ENCODE measurements at regions of chr10 and their contacts with region 1.

Region 1: DNA sequence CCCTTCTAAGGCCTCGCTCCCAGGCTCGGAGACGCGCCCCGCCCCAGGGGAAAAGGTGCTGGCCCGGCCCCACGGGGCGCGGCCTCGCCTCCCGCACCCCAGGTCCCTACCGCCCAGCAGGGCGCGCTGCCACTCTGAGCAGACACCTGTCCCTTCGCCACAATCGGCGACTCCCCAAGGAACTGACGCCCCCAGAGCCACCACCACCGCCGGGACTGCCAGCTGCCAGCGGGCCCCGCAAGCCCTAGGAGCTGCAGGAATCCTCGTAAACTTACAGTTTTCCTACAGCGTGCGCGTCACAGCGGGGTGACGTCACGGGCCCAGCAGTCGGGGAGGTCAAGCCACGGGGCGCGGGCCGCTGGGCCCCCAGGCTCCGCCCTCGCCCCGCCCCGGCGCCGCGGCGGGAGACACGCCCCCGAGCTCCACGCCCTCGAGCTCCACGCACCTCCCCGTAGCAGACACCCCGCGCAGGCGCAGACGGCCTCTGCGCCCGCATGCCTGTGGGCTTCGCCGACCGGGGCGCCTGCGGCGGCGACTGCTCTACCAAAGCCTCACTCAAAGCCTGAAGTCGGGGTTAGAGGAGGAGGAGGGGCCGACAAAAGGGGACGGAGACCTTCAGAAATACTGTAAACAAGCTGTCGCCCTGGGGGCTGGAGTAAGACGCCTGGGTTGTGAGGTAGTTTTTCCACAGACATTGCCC is at the start of gene ZNF438:
- DNase-seq: peak; percentile 98
- ATAC-seq: peak; percentile 84
- H3K4me3 ChIP-seq: peak within 1 kb of the TSS; percentile 61 to 88 (median 76)
- H3K4me3 Mint-ChIP-seq: peak within 1 kb of the TSS; percentile 94
- H3K27ac ChIP-seq: peak within 1 kb of the TSS; percentile 99
- H3K27ac Mint-ChIP-seq: peak within 1 kb of the TSS; percentile 99
- H3K4me1 ChIP-seq: peaks cover 7 to 16% of the 10 kb centered on the region in 2 donors
- H3K4me1 Mint-ChIP-seq: peaks cover 9% of the 10 kb centered on the region
- H3K27me3 ChIP-seq: no peaks in the 10 kb centered on the region
- H3K27me3 Mint-ChIP-seq: no peaks in the 10 kb centered on the region
- CTCF ChIP-seq: peak; percentile 82
- total RNA-seq, gene ZNF438: 3.7 and 3.9 TPM in 2 replicates

Region 2: GRCh38 chr10:30433730-30434272 is 597.9 kb before region 1 on chr10 and contains the start of gene MAP3K8:
- CTCF ChIA-PET with region 1: no interaction called
- POLR2A ChIA-PET with region 1: no interaction called
- intact Hi-C with region 1: loop called (anchors 5 kb)
- DNase-seq: peak; percentile 96
- ATAC-seq: peak; percentile 73
- H3K4me3 ChIP-seq: peak within 1 kb of the TSS; percentile 93 to 99 (median 97)
- H3K4me3 Mint-ChIP-seq: peak within 1 kb of the TSS; percentile 98
- H3K27ac ChIP-seq: peak within 1 kb of the TSS; percentile 95 to 99
- H3K27ac Mint-ChIP-seq: peak within 1 kb of the TSS; percentile 97
- H3K4me1 ChIP-seq: peaks cover 56 to 74% of the 10 kb centered on the region in 2 donors
- H3K4me1 Mint-ChIP-seq: peaks cover 71% of the 10 kb centered on the region
- H3K27me3 ChIP-seq: no peaks in the 10 kb centered on the region
- H3K27me3 Mint-ChIP-seq: no peaks in the 10 kb centered on the region
- CTCF ChIP-seq: no peak
- total RNA-seq, gene MAP3K8: 97.0 and 104 TPM in 2 replicates

Region 3: DNA sequence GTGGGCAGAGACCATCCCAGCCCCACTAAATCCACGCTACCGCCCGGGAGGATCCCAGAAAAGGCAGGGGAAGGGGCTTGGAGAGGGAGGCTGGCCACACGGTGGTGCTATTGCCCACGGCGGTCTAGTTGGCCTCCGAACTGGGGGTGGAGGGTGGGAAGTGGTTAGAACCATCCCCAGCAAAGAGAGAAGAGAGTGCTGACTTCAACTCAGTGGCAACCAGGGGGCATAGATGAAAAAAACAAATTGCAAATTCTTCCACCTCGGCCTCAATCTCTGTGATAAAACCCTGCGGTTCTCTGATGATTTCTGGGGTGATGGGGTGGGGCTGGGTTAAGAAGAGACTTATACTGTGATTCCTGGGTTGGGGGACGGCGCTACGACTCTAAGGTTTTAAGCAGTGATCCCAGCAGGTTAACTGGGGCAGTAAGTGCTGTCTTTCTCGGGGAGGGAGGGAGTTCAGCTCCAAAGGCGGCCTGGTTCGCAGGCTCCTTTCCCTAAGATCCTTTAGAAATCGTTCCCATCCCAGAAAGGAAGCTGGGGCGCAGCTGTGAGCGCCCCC is 247.7 kb before region 1 on chr10:
- CTCF ChIA-PET with region 1: interaction called, 3 read pairs
- POLR2A ChIA-PET with region 1: no interaction called
- intact Hi-C with region 1: loop called (anchors 2 kb)
- DNase-seq: peak; percentile 82
- ATAC-seq: peak; percentile 80
- H3K4me3 ChIP-seq: peak overlapping the region; percentile 42 to 80 (median 63)
- H3K4me3 Mint-ChIP-seq: peak overlapping the region; percentile 77
- H3K27ac ChIP-seq: no peak overlapping the region
- H3K27ac Mint-ChIP-seq: no peak overlapping the region
- H3K4me1 ChIP-seq: peaks cover 0 to 16% of the 10 kb centered on the region in 2 donors
- H3K4me1 Mint-ChIP-seq: peaks cover 11% of the 10 kb centered on the region
- H3K27me3 ChIP-seq: peaks cover 0 to 16% (median 4%) of the 10 kb centered on the region in 4 experiments
- H3K27me3 Mint-ChIP-seq: peaks cover 10% of the 10 kb centered on the region
- CTCF ChIP-seq: peak; percentile 73

Region 4: GRCh38 chr10:30970760-30971460 is 60.8 kb before region 1 on chr10:
- CTCF ChIA-PET with region 1: no interaction called
- POLR2A ChIA-PET with region 1: no interaction called
- intact Hi-C with region 1: no loop called
- DNase-seq: no peak
- ATAC-seq: no peak
- H3K4me3 ChIP-seq: no peak overlapping the region
- H3K4me3 Mint-ChIP-seq: no peak overlapping the region
- H3K27ac ChIP-seq: no peak overlapping the region
- H3K27ac Mint-ChIP-seq: no peak overlapping the region
- H3K4me1 ChIP-seq: peaks cover 0 to 5% of the 10 kb centered on the region in 2 donors
- H3K4me1 Mint-ChIP-seq: no peaks in the 10 kb centered on the region
- H3K27me3 ChIP-seq: no peaks in the 10 kb centered on the region
- H3K27me3 Mint-ChIP-seq: no peaks in the 10 kb centered on the region
- CTCF ChIP-seq: no peak

Region 5: GRCh38 chr10:31157123-31158010 is 125.7 kb after region 1 on chr10:
- CTCF ChIA-PET with region 1: no interaction called
- POLR2A ChIA-PET with region 1: no interaction called
- intact Hi-C with region 1: no loop called
- DNase-seq: no peak
- ATAC-seq: no peak
- H3K4me3 ChIP-seq: no peak overlapping the region
- H3K4me3 Mint-ChIP-seq: no peak overlapping the region
- H3K27ac ChIP-seq: no peak overlapping the region
- H3K27ac Mint-ChIP-seq: no peak overlapping the region
- H3K4me1 ChIP-seq: no peaks in the 10 kb centered on the region
- H3K4me1 Mint-ChIP-seq: no peaks in the 10 kb centered on the region
- H3K27me3 ChIP-seq: no peaks in the 10 kb centered on the region
- H3K27me3 Mint-ChIP-seq: no peaks in the 10 kb centered on the region
- CTCF ChIP-seq: no peak

Region 6: GRCh38 chr10:31374146-31374696 is 342.5 kb after region 1 on chr10:
- CTCF ChIA-PET with region 1: no interaction called
- POLR2A ChIA-PET with region 1: interaction called, 11 read pairs
- intact Hi-C with region 1: no loop called
- DNase-seq: no peak
- ATAC-seq: no peak
- H3K4me3 ChIP-seq: no peak overlapping the region
- H3K4me3 Mint-ChIP-seq: no peak overlapping the region
- H3K27ac ChIP-seq: no peak overlapping the region
- H3K27ac Mint-ChIP-seq: no peak overlapping the region
- H3K4me1 ChIP-seq: peaks cover 0 to 3% of the 10 kb centered on the region in 2 donors
- H3K4me1 Mint-ChIP-seq: peaks cover 29% of the 10 kb centered on the region
- H3K27me3 ChIP-seq: no peaks in the 10 kb centered on the region
- H3K27me3 Mint-ChIP-seq: no peaks in the 10 kb centered on the region
- CTCF ChIP-seq: no peak

Region 7: DNA sequence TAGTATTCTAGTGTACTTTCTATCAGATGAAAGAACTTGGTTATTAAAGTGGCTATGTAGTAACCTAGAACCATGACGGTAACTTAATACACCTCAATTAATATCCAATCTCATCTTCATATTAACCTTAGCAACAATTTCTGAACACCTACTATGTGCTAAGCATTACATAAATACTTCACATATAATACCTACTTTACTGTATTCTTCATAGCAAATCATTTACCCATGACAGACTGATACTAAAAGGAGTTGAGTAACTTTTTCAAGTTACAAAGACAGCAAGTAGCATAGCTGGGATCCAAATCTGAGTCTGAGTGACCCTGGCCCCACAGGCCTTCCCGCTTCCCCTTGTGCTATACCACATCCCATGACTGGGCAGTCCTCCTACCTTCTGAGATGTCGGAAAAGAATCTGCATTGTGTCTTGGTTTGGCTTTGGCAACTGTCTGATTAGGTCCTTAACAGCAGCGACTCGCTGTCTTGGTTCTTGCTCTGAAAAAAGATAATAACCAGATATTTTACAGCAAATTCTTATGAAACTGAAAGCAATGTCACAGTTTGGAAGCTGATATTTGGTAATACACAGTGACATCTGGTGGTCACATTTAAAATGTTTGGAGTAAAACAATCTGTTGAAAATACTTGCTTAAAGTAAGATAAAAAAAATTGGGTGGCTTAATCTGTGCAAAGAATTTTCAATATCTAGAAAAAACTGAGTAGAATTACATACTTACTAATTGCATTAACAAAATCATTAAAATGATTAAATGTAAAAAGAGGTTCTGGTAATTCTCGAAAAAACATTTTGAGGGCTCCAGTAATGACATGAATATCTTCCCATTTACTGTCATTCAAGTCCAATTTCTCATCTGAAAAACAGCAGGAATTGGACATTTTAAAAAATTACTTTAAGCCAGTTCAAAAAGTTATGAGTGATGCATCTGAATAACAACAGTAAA is 776.8 kb after region 1 on chr10:
- CTCF ChIA-PET with region 1: interaction called, 3 read pairs
- POLR2A ChIA-PET with region 1: no interaction called
- intact Hi-C with region 1: loop called (anchors 1 kb)
- DNase-seq: peak; percentile 71
- ATAC-seq: no peak
- H3K4me3 ChIP-seq: no peak overlapping the region
- H3K4me3 Mint-ChIP-seq: no peak overlapping the region
- H3K27ac ChIP-seq: no peak overlapping the region
- H3K27ac Mint-ChIP-seq: no peak overlapping the region
- H3K4me1 ChIP-seq: peaks cover 0 to 3% of the 10 kb centered on the region in 2 donors
- H3K4me1 Mint-ChIP-seq: peaks cover 3% of the 10 kb centered on the region
- H3K27me3 ChIP-seq: no peaks in the 10 kb centered on the region
- H3K27me3 Mint-ChIP-seq: no peaks in the 10 kb centered on the region
- CTCF ChIP-seq: peak; percentile 78

Region 8: GRCh38 chr10:32445740-32446535 is 1414.2 kb after region 1 on chr10 and contains the start of gene CCDC7:
- CTCF ChIA-PET with region 1: no interaction called
- POLR2A ChIA-PET with region 1: no interaction called
- intact Hi-C with region 1: loop called (anchors 10 kb)
- DNase-seq: peak; percentile 93
- ATAC-seq: peak; percentile 99
- H3K4me3 ChIP-seq: peak within 1 kb of the TSS; percentile 93 to 99 (median 98)
- H3K4me3 Mint-ChIP-seq: peak within 1 kb of the TSS; percentile 98
- H3K27ac ChIP-seq: peak within 1 kb of the TSS; percentile 95 to 99
- H3K27ac Mint-ChIP-seq: peak within 1 kb of the TSS; percentile 100
- H3K4me1 ChIP-seq: peaks cover 7 to 8% of the 10 kb centered on the region in 2 donors
- H3K4me1 Mint-ChIP-seq: peaks cover 13% of the 10 kb centered on the region
- H3K27me3 ChIP-seq: peaks cover 0 to 4% (median 0%) of the 10 kb centered on the region in 4 experiments
- H3K27me3 Mint-ChIP-seq: peaks cover 16% of the 10 kb centered on the region
- CTCF ChIP-seq: peak; percentile 65
- total RNA-seq, gene CCDC7: 23.5 and 26.6 TPM in 2 replicates

Measured in B cell (primary cell).